ENCODE measurements at regions of chr9 and their contacts with region 1.

Region 1: GRCh38 chr9:124776954-124777665 is at the start of gene OLFML2A:
- DNase-seq: no peak
- H3K4me3 ChIP-seq: peak within 1 kb of the TSS; percentile 64
- H3K27ac ChIP-seq: peak within 1 kb of the TSS; percentile 21
- H3K27me3 ChIP-seq: no peaks in the 10 kb centered on the region
- CTCF ChIP-seq: peak; percentile 42
- polyA plus RNA-seq, gene OLFML2A: 22.3 and 34.4 TPM in 2 replicates

Region 2: DNA sequence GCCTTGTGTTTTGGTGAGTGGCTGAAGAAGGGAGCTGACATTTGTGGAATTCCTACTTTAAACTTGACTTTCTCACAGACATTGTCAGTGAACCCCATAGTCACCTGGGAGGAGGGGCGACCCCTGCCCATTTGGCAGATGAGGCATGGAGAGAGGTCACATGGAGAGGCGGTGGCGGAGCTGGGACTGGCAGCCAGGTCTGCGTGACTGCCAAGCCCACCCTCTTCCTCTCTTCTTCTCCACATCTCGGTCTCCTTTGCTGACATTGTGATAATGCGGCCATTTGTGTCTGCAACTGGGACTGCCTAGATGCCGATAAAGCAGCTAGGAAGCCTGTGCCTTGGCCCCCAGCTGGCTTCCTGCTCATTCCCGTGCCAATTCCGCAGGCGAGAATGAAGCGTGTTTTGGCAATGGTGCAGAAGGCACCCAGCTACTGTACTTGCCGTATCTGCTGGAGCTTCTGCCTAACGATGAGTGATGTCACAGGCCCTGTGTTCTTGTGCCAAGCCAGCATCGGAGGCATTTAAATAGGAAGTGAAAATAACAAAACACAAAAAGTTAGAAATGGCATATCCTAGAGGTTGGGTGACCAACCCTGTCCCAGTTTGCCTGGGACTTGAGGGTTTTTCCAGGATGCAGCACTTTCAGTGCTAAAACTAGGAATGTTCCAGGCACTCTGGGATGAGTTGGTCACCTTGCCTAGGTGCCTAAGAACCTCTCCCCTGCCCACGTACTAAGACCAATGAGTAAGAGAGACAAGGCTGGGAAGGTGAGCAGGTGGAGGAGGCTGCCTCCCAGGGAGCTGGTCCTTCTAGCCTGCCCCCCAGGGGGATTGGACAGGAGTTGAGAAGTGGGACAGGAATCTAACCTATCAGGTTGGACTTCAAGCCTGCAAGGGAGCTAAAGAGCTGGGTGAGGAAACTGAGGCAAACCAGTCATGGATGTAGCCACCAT is 23.5 kb after region 1 on chr9:
- CTCF ChIA-PET with region 1: interaction called, 12 read pairs
- POLR2A ChIA-PET with region 1: interaction called, 12 read pairs
- DNase-seq: no peak
- H3K4me3 ChIP-seq: no peak overlapping the region
- H3K27ac ChIP-seq: no peak overlapping the region
- H3K27me3 ChIP-seq: no peaks in the 10 kb centered on the region
- CTCF ChIP-seq: no peak

Region 3: GRCh38 chr9:124831642-124832364 is 54.7 kb after region 1 on chr9:
- CTCF ChIA-PET with region 1: interaction called, 16 read pairs
- POLR2A ChIA-PET with region 1: interaction called, 21 read pairs
- DNase-seq: no peak
- H3K4me3 ChIP-seq: no peak overlapping the region
- H3K27ac ChIP-seq: peak overlapping the region; percentile 70
- H3K27me3 ChIP-seq: no peaks in the 10 kb centered on the region
- CTCF ChIP-seq: no peak

Region 4: DNA sequence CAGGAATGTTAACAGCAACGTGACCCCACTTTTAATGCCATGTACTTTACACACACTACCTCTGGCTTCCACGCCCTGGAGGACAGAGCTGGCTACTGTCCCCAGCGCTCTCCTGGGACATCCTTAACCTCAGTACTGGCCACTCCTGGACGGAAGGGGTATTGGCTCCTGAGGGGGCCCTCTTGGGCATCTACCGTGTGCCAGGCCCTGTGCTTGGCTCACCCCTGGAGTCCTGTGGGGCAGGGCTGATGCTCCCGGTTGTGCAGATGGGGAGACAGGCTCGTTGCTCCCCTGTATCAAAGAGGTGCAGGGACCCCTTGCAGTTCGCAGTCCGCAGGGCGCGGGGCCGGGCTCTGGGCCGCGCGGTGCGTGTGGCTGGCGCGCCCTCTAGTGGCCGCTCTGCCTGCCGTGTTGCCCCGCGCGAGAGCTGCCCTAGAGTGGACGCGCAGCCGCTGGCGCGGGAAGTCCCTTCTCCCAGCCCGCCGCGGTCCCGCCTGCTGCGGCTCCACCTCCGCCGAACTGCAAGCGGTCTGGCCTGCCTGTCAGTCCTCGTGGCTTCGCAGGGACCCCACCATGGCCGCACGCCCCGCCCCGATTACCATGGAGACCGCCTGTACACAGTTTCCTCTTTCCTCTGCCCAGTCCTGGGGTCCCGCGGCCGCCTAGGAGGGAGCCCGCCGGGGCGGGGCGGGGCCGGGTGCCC is 75.9 kb after region 1 on chr9 and contains the start of gene WDR38:
- CTCF ChIA-PET with region 1: interaction called, 674 read pairs
- POLR2A ChIA-PET with region 1: interaction called, 17 read pairs
- DNase-seq: no peak
- H3K4me3 ChIP-seq: peak within 1 kb of the TSS; percentile 61
- H3K27ac ChIP-seq: no peak within 1 kb of the TSS
- H3K27me3 ChIP-seq: peaks cover 3% of the 10 kb centered on the region
- CTCF ChIP-seq: peak; percentile 82
- polyA plus RNA-seq, gene WDR38: not detected in 2 replicates

Region 5: GRCh38 chr9:125372441-125373226 is 595.5 kb after region 1 on chr9:
- CTCF ChIA-PET with region 1: interaction called, 3 read pairs
- POLR2A ChIA-PET with region 1: interaction called, 12 read pairs
- DNase-seq: no peak
- H3K4me3 ChIP-seq: no peak overlapping the region
- H3K27ac ChIP-seq: no peak overlapping the region
- H3K27me3 ChIP-seq: peaks cover 7% of the 10 kb centered on the region
- CTCF ChIP-seq: no peak